ENCODE measurements at regions of chr12 and their contacts with region 1.

Region 1: DNA sequence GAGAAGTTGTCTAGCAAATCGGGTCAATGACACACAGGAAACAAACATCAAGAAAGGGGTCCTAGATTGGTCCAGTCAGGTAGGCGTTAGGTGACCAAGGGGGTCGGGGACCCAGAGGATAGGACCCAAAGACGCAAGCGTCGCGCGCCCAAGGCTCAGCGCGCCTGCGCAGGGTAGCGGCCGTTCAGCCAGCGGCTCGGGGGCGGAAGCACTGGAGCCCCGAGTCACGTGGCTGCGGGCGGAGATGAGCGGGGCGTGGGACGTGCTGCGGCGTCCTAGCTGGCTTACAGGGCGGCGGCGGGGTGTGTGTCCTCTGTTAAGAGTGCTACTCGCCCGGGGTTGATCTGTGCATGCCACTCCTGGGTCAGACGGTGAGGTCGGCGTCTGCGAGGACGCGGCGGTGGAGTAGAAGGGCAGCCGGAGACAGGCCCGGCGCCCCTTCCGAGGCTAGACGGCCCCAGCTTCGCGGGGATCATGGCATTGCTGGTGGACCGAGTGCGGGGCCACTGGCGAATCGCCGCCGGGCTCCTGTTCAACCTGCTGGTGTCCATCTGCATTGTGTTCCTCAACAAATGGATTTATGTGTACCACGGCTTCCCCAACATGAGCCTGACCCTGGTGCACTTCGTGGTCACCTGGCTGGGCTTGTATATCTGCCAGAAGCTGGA is at the start of gene SLC35E3:
- DNase-seq: peak; percentile 100
- H3K4me3 ChIP-seq: peak within 1 kb of the TSS; percentile 66 to 93 (median 83)
- H3K27ac ChIP-seq: peak within 1 kb of the TSS; percentile 75 to 93 (median 88)
- H3K4me1 ChIP-seq: peaks cover 13 to 73% (median 34%) of the 10 kb centered on the region in 6 donors
- H3K27me3 ChIP-seq: no peaks in the 10 kb centered on the region
- CTCF ChIP-seq: peak in 2 of 11 experiments; percentile 24 to 31
- POLR2A ChIP-seq: peak in 2 of 3 donors; percentile 1 to 65
- total RNA-seq, gene SLC35E3: 4.8 to 16.1 (median 7.8) TPM

Region 2: GRCh38 chr12:68807576-68808387 is 61.7 kb after region 1 on chr12 and contains the start of gene MDM2:
- intact Hi-C with region 1: loop called (anchors 10 kb)
- DNase-seq: peak; percentile 99
- H3K4me3 ChIP-seq: peak within 1 kb of the TSS; percentile 52 to 84 (median 76)
- H3K27ac ChIP-seq: peak within 1 kb of the TSS; percentile 94 to 100 (median 98)
- H3K4me1 ChIP-seq: peaks cover 0 to 52% (median 48%) of the 10 kb centered on the region in 6 donors
- H3K27me3 ChIP-seq: no peaks in the 10 kb centered on the region
- CTCF ChIP-seq: peak; percentile 87 to 98 (median 94)
- POLR2A ChIP-seq: peak in 2 of 3 donors; percentile 56 to 58
- total RNA-seq, gene MDM2: 98.9 to 248 (median 125) TPM

Measured in spleen (tissue), 13 donors.